ENCODE measurements at regions of chr2 and their contacts with region 1.

Region 1: DNA sequence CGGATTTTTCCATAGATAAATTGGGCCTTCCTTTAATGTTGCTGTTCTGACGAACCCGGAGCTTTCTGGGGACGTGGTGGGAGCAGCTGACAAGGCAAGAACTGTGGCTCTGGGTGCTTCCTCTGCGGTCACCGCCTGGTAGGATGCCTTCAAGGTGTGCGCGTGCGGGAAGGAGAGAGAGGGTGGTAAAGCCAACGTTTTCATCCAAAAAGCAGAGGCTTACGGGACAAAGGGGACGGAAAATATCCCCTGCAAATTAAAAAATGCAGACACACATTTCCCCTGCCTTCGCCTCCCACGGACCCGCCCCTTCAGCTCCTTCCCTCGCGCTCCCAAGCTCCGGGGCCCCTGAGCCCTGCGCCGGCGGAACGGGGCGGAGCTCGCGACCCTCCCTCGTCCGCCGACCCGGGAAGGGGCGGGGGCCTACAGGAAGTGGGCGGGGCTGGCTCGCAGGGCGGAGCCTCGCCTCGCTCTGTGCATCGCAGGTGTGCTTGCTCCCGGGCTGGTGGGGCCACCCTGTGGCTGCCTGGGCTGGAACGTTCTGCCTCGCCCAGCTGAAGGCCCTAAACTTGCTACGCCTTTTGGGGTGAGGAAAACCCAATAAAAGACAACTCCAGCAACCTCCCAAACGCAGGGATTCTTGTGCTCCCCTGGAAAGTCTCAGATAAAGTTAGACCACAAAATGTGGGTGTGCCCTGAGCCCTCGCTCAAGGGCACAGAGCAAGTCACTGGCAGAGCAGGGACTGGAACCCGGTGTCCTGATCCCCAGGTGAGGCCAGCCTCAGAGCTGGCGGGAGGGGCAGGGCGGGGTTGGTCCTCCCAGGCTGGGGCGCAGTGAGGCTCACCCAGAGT is 25.4 kb upstream of the SLC66A3 start:
- DNase-seq: peak; percentile 89
- H3K4me3 Mint-ChIP-seq: peak overlapping the region; percentile 57
- H3K27ac Mint-ChIP-seq: peak overlapping the region; percentile 71
- H3K4me1 Mint-ChIP-seq: peaks cover 21% of the 10 kb centered on the region
- H3K27me3 Mint-ChIP-seq: no peaks in the 10 kb centered on the region

Region 2: DNA sequence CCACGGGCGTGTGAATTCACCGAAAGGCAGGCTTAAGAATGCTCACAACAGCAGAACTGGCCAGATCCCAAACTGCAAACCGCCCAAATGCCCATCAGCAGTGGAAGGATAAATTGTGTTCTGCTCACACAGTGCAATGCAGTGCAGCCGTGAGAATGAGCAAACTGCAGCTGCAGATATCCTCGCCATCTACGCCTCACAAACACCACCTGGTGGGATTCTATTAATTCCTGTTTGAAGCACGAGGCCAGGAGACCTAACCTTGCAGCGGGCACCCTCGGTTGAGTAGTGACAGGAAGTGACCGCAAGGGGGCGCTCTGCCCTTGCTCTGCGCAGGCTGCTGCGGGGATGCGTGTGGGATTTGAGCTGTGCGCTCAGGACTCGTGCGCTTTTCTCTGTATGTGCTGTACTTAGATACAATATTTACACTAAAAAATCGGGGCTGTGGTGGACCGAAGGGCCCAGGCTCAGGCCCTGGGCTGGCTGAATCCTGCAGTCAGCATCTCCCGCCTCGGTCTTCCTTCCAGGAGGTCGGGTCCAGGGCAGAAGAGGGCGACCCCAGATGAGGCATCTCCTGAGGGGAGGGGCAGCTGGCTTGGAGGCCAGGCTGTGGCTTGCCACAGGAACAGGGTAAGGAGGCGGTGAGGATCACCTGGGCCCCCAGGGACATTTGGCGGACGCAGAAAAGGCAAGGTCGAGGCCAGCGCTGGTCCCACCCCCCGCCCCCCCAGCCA is 297.5 kb before region 1 on chr2:
- CTCF ChIA-PET with region 1: interaction called, 93 read pairs
- intact Hi-C with region 1: loop called (anchors 1 kb)
- DNase-seq: peak; percentile 90
- H3K4me3 Mint-ChIP-seq: no peak overlapping the region
- H3K27ac Mint-ChIP-seq: no peak overlapping the region
- H3K4me1 Mint-ChIP-seq: peaks cover 3% of the 10 kb centered on the region
- H3K27me3 Mint-ChIP-seq: no peaks in the 10 kb centered on the region

Region 3: DNA sequence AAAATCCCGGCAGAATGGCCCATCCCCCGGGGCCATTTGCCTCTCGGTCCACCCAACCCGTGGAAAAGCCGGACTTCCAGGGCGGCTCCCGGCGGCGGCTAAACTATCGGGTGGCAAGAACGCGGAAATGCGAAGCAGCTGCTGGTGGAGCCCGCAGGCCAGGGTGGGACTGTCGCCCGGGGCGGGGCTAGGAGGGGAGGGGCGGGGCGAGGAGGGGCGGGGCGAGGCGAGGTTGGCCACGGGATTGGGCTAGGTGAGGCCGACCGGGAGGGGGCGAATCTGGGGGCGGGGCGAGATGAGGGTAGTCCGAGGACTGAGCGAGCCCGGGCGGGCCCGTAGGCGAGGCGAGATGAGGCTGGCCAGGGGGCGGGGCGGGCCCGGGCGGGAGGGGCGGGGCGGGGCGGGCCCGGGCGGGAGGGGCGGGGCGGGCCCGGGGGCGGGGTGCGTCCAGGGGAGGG is 25.1 kb after region 1 on chr2:
- CTCF ChIA-PET with region 1: interaction called, 30 read pairs
- intact Hi-C with region 1: loop called (anchors 1 kb)
- DNase-seq: peak; percentile 99
- H3K4me3 Mint-ChIP-seq: peak overlapping the region; percentile 76
- H3K27ac Mint-ChIP-seq: peak overlapping the region; percentile 61
- H3K4me1 Mint-ChIP-seq: peaks cover 9% of the 10 kb centered on the region
- H3K27me3 Mint-ChIP-seq: no peaks in the 10 kb centered on the region

Region 4: GRCh38 chr2:11174222-11174621 is 44.4 kb after region 1 on chr2:
- CTCF ChIA-PET with region 1: no interaction called
- intact Hi-C with region 1: no loop called
- DNase-seq: no peak
- H3K4me3 Mint-ChIP-seq: no peak overlapping the region
- H3K27ac Mint-ChIP-seq: no peak overlapping the region
- H3K4me1 Mint-ChIP-seq: peaks cover 12% of the 10 kb centered on the region
- H3K27me3 Mint-ChIP-seq: no peaks in the 10 kb centered on the region

Region 5: DNA sequence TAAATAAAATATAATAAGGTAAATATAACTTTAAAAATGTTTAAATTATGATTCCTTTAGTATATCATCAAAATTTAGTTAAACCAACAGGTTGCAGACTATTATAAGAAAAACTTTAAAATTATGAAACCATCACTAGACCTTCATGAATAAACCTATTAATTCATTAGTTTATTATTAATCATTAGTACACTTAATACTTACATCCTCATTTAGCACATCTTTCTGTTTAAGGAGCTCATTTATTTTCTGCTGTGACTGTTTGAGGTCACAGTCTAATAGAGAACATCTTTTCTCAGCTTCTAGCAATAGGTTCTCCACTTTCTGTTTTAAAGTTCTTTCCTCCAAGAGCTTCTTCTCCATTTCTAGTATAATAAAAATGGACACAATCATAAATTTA is 78.3 kb after region 1 on chr2:
- CTCF ChIA-PET with region 1: interaction called, 10 read pairs
- intact Hi-C with region 1: no loop called
- DNase-seq: no peak
- H3K4me3 Mint-ChIP-seq: no peak overlapping the region
- H3K27ac Mint-ChIP-seq: no peak overlapping the region
- H3K4me1 Mint-ChIP-seq: peaks cover 9% of the 10 kb centered on the region
- H3K27me3 Mint-ChIP-seq: no peaks in the 10 kb centered on the region

Region 6: DNA sequence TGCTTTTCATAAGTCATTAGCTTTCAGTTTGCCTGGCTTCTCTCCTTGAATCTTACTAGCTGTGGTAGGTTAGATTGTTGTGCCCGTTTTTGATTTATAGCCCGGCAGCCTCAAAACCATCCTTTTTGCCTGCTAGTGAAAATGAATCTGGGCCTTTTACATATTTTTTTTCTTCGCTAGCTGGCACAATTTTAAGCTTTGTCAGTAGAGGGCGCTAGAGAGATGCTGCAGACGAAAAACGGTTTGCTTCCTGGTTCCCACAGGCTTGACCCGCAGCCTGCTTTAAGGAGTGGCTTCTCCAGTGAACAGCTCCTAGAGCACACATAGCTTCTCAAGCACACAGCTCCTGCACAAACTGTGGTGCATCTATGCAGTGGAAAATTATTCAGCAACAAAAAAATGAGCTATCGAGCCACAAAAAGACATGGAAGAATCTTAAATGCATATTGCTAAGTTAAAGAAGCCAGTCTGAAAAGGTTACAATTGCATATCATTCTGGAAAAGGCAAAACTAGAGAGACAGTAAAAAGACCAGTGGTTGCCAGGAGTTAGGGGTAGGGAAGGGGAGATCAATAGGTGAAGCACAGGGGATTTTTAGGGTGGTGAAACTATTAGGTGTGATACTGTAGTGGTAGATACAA is 288.2 kb after region 1 on chr2:
- CTCF ChIA-PET with region 1: interaction called, 14 read pairs
- intact Hi-C with region 1: no loop called
- DNase-seq: peak; percentile 14
- H3K4me3 Mint-ChIP-seq: no peak overlapping the region
- H3K27ac Mint-ChIP-seq: no peak overlapping the region
- H3K4me1 Mint-ChIP-seq: no peaks in the 10 kb centered on the region
- H3K27me3 Mint-ChIP-seq: peaks cover 7% of the 10 kb centered on the region

Region 7: DNA sequence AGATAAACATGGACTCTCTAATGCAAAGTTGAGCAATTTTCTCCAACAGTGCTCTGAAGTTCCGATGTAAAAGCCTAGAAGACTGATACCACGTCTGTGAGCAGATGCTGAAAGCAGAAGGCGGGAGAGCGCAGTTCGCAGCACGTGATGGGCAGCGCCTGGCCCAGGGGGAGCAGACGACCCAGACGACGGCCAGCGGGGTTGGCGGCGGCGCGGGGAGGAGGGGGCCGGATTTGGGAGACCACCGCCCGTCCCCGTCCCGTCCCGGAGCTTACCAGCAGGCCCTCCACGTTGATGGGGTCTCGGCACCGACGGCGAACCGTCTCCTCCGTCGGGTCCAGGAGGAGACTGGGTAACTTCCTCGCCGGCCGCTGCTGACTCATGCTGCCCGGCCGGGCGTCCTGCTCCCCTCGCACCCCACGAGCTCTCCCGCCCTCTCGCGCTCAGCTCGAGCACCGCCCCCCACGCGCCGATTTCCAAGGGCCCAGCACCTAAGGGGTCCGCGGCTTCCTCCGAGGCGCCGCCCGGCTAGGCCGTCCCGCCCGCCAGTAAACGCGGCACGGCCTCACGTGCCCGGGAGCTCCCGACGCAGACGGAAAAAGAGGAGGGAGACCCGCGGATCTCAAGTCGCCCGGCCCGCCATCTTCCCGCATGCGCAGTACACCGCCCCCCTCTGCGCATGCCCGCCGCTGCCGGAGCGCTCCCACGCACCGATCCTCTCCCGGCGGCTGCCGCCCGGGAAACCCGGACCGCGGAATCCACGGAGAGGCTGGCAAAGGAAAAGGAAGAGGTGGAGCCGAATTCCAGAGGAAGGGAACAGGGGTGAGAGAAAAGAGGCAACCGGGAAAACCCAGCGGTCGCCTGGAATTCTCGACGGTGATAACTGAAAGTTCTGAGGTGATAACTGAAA is 335.9 kb after region 1 on chr2 and contains the start of gene E2F6:
- CTCF ChIA-PET with region 1: interaction called, 10 read pairs
- intact Hi-C with region 1: loop called (anchors 5 kb)
- DNase-seq: peak; percentile 89
- H3K4me3 Mint-ChIP-seq: peak within 1 kb of the TSS; percentile 91
- H3K27ac Mint-ChIP-seq: peak within 1 kb of the TSS; percentile 83
- H3K4me1 Mint-ChIP-seq: peaks cover 40% of the 10 kb centered on the region
- H3K27me3 Mint-ChIP-seq: no peaks in the 10 kb centered on the region
- total RNA-seq, gene E2F6: 8.7 to 9.4 TPM

Region 8: DNA sequence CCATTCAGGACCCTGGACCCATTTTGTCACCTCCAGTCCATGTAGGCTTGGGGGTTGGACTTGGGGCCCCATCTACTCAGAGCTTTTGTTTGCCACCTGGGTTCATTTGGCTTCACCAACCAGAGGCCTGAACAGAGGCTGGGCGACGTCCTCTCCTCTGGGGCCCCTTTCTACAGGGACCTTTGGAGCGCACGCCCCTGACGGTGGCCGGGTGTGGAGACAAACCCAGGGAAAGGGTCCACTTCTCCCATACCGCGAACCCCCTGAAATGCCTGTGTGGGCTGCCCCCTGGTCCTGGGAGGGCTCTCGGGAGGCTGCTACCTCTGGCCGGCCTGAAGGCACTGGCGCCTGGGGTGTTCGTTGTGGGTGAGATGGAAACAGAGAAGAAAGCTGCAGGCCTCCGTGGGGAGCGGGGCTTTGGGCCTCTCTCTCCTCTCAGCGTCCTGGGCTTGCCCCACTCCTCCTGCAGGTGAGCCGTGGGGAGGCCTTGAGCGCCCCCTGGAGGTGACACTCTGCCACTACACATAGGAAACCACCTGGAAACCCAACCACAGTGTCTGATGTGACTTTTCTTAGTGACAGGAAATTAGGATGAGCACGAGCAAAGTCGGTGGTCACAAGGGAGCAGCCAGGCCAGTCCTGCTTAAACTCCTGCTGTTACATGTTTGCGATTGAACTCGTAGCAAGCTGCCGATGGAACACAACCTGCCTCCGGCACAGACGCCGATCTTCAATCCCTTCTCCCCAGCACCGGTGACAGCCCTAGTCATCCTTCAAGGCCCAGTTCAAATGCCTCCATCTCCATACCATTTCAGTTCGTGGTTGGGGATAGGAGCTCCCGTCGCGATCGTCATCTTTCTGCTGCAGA is 552.1 kb after region 1 on chr2:
- CTCF ChIA-PET with region 1: no interaction called
- intact Hi-C with region 1: loop called (anchors 1 kb)
- DNase-seq: peak; percentile 80
- H3K4me3 Mint-ChIP-seq: no peak overlapping the region
- H3K27ac Mint-ChIP-seq: no peak overlapping the region
- H3K4me1 Mint-ChIP-seq: peaks cover 3% of the 10 kb centered on the region
- H3K27me3 Mint-ChIP-seq: peaks cover 2% of the 10 kb centered on the region